Dendritic cell treated with granulocyte-macrophage colony-stimulating factor and Interleukin-4, amounts not matched to agents 40 ng/mL and 50 ng/mL, for 4 days (primary cell): ENCODE measurements at regions of chr4 and their contacts with region 1.

Region 1: GRCh38 chr4:147778942-147779341 is 47.1 kb downstream of the ARHGAP10 start:
- H3K4me3 Mint-ChIP-seq: peak overlapping the region; percentile 13
- H3K27ac Mint-ChIP-seq: peak overlapping the region; percentile 89
- H3K4me1 Mint-ChIP-seq: peaks cover 80% of the 10 kb centered on the region
- H3K27me3 Mint-ChIP-seq: no peaks in the 10 kb centered on the region

Region 2: DNA sequence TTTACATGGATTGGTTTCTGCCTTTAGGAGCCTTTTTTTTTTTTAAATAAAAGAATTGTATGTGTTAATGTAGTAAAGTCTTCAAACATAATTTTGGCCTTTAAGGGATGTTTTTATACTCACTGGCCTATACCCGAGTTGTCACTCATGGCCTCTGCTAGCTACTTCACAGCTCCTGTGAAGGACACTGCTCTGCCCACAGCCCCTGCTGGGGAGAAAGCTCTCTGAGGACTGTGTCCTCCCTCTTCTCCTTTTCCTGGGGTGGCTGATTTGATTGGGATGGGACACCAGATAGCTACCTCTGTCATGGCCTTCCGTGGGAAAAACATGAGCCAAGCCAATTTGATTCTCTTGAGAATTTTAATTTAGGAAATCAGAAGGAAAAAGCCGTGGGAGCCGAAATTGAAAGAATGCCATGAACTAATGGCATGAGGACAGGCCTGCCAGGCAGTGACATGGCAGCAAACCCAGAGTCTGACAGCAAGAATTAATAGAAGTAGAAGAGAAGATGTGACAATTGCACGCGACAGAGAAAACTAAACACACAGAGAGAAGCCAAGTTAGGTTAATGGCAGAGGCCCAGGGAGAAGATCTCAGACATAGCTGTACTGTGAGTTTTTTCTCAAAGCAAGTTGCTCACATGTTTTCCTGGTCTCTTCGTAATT is 34.3 kb after region 1 on chr4:
- intact Hi-C with region 1: loop called (anchors 5 kb)
- H3K4me3 Mint-ChIP-seq: no peak overlapping the region
- H3K27ac Mint-ChIP-seq: peak overlapping the region; percentile 64
- H3K4me1 Mint-ChIP-seq: peaks cover 95% of the 10 kb centered on the region
- H3K27me3 Mint-ChIP-seq: no peaks in the 10 kb centered on the region

Region 3: GRCh38 chr4:147825451-147826287 is 46.7 kb after region 1 on chr4:
- intact Hi-C with region 1: loop called (anchors 5 kb)
- H3K4me3 Mint-ChIP-seq: peak overlapping the region; percentile 51
- H3K27ac Mint-ChIP-seq: peak overlapping the region; percentile 93
- H3K4me1 Mint-ChIP-seq: peaks cover 93% of the 10 kb centered on the region
- H3K27me3 Mint-ChIP-seq: no peaks in the 10 kb centered on the region